A549 (cell line): ENCODE measurements at regions of chr9 and their contacts with region 1.

Region 1: GRCh38 chr9:124880501-124880900 is 18.6 kb downstream of the ARPC5L start:
- DNase-seq: no peak
- ATAC-seq: no peak
- H3K4me3 ChIP-seq: no peak overlapping the region
- H3K27ac ChIP-seq: no peak overlapping the region
- H3K4me1 ChIP-seq: no peaks in the 10 kb centered on the region
- CTCF ChIP-seq: no peak
- EP300 ChIP-seq: no peak
- POLR2A ChIP-seq: no peak
- RAD21 ChIP-seq: no peak

Region 2: GRCh38 chr9:124894741-124895170 is 14.3 kb after region 1 on chr9:
- CTCF ChIA-PET with region 1: interaction called, 18 read pairs
- POLR2A ChIA-PET with region 1: no interaction called
- DNase-seq: peak in 1 of 2 experiments; percentile 59
- ATAC-seq: peak; percentile 88 to 91
- H3K4me3 ChIP-seq: no peak overlapping the region
- H3K27ac ChIP-seq: no peak overlapping the region
- H3K4me1 ChIP-seq: no peaks in the 10 kb centered on the region; the same call in 2 of the 3 replicates
- CTCF ChIP-seq: peak; percentile 53
- EP300 ChIP-seq: no peak
- POLR2A ChIP-seq: no peak
- RAD21 ChIP-seq: peak; percentile 39 to 67; a peak in 4 of 5 replicates